ENCODE measurements at regions of chr2 and their contacts with region 1.

Region 1: GRCh38 chr2:64644177-64645004 is 9.3 kb downstream of the SERTAD2 start:
- DNase-seq: peak; percentile 48
- ATAC-seq: peak; percentile 45
- H3K4me3 Mint-ChIP-seq: peak overlapping the region; percentile 86
- H3K27ac Mint-ChIP-seq: peak overlapping the region; percentile 93
- H3K4me1 Mint-ChIP-seq: peaks cover 96% of the 10 kb centered on the region
- H3K27me3 Mint-ChIP-seq: no peaks in the 10 kb centered on the region
- CTCF ChIP-seq: no peak

Region 2: DNA sequence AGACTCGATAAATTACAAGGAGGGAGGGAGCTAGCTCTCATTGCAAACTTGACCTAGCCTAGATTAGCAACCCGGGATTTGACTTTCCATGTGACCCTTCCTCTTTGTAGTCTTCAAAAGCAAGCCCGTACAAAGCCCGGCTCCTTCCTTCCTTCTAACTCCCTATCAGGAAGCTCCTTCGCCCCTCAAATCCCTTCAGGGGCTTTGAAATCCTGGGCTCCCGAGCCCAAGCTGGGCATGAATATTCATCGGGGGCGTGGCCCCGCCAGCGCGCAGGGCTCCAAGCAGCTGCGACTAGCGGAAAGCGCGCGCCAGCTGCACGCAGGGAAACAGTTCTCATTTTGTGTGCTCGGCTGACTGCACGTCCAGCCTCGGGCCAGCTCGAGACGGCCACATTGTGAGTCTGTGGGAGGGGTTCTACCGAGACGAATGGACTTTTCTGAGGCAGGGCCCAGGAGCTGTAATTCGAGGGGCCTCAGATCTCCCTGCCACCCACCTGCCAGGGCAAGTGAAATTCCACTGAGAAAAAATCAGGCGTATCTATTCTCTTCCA is 416.2 kb before region 1 on chr2:
- CTCF ChIA-PET with region 1: no interaction called
- POLR2A ChIA-PET with region 1: no interaction called
- intact Hi-C with region 1: no loop called
- DNase-seq: peak; percentile 67
- ATAC-seq: peak; percentile 96
- H3K4me3 Mint-ChIP-seq: peak overlapping the region; percentile 93
- H3K27ac Mint-ChIP-seq: peak overlapping the region; percentile 91
- H3K4me1 Mint-ChIP-seq: peaks cover 35% of the 10 kb centered on the region
- H3K27me3 Mint-ChIP-seq: no peaks in the 10 kb centered on the region
- CTCF ChIP-seq: no peak

Region 3: DNA sequence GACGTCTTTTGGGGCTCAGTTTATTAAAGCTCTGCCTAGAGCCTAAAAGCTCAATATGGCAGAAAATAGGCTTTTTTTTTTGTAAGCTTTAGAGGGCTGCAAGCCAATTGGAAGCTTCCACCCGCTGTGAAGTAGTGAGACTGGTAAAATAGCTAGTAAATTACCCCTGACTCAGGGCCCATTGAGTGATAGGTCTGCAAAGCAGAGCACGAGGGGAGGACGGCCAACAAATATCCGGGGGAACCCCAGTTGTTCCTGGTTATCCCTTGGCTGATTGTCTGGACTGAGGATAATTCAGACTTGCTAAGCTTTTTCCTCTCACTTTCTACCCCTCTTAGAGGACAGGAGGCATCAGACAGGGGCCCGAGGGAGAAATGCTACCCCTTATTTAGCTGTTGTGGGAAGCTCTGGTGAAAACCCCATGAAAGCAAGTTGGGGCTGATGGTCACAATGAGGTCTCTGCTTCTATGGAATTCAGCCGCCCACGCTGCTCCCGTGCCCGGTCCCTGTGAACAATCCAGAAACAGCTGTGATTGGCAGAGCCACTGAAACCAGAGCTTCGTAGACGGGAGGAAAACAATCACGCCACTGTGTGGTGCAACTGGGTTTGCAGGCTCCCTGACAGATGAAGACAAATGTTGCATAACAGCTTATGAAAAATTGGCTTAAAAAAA is 332.3 kb before region 1 on chr2:
- CTCF ChIA-PET with region 1: no interaction called
- POLR2A ChIA-PET with region 1: no interaction called
- intact Hi-C with region 1: no loop called
- DNase-seq: no peak
- ATAC-seq: no peak
- H3K4me3 Mint-ChIP-seq: no peak overlapping the region
- H3K27ac Mint-ChIP-seq: no peak overlapping the region
- H3K4me1 Mint-ChIP-seq: no peaks in the 10 kb centered on the region
- H3K27me3 Mint-ChIP-seq: no peaks in the 10 kb centered on the region
- CTCF ChIP-seq: no peak

Region 4: GRCh38 chr2:64586883-64587481 is 57.4 kb before region 1 on chr2:
- CTCF ChIA-PET with region 1: interaction called, 22 read pairs
- POLR2A ChIA-PET with region 1: interaction called, 4 read pairs
- intact Hi-C with region 1: loop called (anchors 1 kb)
- DNase-seq: no peak
- ATAC-seq: peak; percentile 62
- H3K4me3 Mint-ChIP-seq: no peak overlapping the region
- H3K27ac Mint-ChIP-seq: peak overlapping the region; percentile 50
- H3K4me1 Mint-ChIP-seq: peaks cover 17% of the 10 kb centered on the region
- H3K27me3 Mint-ChIP-seq: no peaks in the 10 kb centered on the region
- CTCF ChIP-seq: peak; percentile 77

Region 5: GRCh38 chr2:64661741-64662169 is 17.4 kb after region 1 on chr2:
- CTCF ChIA-PET with region 1: interaction called, 52 read pairs
- POLR2A ChIA-PET with region 1: interaction called, 205 read pairs
- intact Hi-C with region 1: loop called (anchors 1 kb)
- DNase-seq: no peak
- ATAC-seq: peak; percentile 28
- H3K4me3 Mint-ChIP-seq: peak overlapping the region; percentile 56
- H3K27ac Mint-ChIP-seq: peak overlapping the region; percentile 88
- H3K4me1 Mint-ChIP-seq: peaks cover 72% of the 10 kb centered on the region
- H3K27me3 Mint-ChIP-seq: no peaks in the 10 kb centered on the region
- CTCF ChIP-seq: no peak

Region 6: GRCh38 chr2:64730551-64731262 is 86.3 kb after region 1 on chr2:
- CTCF ChIA-PET with region 1: interaction called, 10 read pairs
- POLR2A ChIA-PET with region 1: interaction called, 164 read pairs
- intact Hi-C with region 1: no loop called
- DNase-seq: peak; percentile 24
- ATAC-seq: peak; percentile 45
- H3K4me3 Mint-ChIP-seq: peak overlapping the region; percentile 84
- H3K27ac Mint-ChIP-seq: peak overlapping the region; percentile 91
- H3K4me1 Mint-ChIP-seq: peaks cover 66% of the 10 kb centered on the region
- H3K27me3 Mint-ChIP-seq: no peaks in the 10 kb centered on the region
- CTCF ChIP-seq: no peak

Region 7: GRCh38 chr2:64859312-64860212 is 215.2 kb after region 1 on chr2:
- CTCF ChIA-PET with region 1: interaction called, 25 read pairs
- POLR2A ChIA-PET with region 1: interaction called, 276 read pairs
- intact Hi-C with region 1: no loop called
- DNase-seq: peak; percentile 44
- ATAC-seq: peak; percentile 19
- H3K4me3 Mint-ChIP-seq: peak overlapping the region; percentile 76
- H3K27ac Mint-ChIP-seq: peak overlapping the region; percentile 94
- H3K4me1 Mint-ChIP-seq: peaks cover 36% of the 10 kb centered on the region
- H3K27me3 Mint-ChIP-seq: no peaks in the 10 kb centered on the region
- CTCF ChIP-seq: no peak

Region 8: DNA sequence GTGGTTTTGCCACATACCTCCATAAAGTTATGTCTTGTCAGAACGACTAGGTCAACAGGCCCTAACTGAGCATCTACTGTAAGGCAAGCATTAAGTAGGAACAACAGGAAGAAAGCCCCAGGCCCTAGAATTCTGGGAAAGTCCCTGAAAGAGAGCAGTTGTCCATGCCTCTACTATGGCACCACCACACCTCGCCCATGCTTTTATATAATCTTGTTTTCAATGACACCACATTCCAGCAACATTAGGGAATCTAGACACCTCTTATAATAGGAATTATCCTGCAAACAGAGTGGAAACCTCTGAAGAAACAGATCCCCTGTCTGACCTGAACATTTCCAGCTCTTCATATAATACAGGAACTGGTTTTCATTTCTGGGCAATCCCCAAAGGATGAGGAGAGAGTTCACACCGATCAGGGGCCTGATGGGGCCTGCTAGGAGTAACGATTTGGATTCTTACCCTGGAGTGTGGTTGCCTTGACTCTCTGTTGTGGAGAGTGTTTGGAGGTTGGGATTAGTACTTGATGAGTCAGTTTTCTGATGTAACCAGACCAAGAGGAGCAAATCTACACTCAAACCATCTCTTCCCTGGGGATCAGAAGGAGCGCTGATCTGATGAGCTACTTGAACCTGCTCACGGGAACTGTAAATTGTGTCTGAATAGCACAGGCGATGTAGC is 379.9 kb after region 1 on chr2:
- CTCF ChIA-PET with region 1: no interaction called
- POLR2A ChIA-PET with region 1: no interaction called
- intact Hi-C with region 1: loop called (anchors 2 kb)
- DNase-seq: no peak
- ATAC-seq: no peak
- H3K4me3 Mint-ChIP-seq: peak overlapping the region; percentile 29
- H3K27ac Mint-ChIP-seq: peak overlapping the region; percentile 63
- H3K4me1 Mint-ChIP-seq: peaks cover 58% of the 10 kb centered on the region
- H3K27me3 Mint-ChIP-seq: no peaks in the 10 kb centered on the region
- CTCF ChIP-seq: no peak

Measured in activated B cell treated with CpG ODN at 0.5 μM for 24 hours (primary cell).